ENCODE measurements at regions of chr6 and their contacts with region 1.

Region 1: DNA sequence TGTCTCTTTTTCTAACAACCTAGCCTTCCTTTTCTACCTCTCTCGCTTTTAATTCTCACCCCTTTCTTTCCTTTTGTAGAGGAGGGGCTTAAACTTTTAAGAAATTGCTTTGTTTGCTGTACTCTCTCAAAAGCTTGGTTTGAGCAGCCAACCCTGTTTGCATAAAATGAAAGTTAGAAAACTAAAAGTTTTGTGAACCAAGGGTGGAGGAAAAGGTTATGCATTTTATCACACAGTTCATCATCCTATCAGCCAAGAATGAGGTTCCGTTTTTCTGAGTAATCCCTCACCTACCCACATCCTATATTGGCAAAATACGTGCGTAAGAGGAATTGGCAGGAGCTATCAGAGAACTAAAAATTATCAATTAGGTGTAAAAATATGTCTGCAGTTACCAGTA is 42.8 kb upstream of the LOC128125822 start:
- DNase-seq: no peak
- H3K4me3 ChIP-seq: no peak overlapping the region
- H3K27ac ChIP-seq: no peak overlapping the region
- H3K4me1 ChIP-seq: peaks cover 19% of the 10 kb centered on the region
- CTCF ChIP-seq: no peak

Region 2: GRCh38 chr6:62803094-62803493 is 726.4 kb before region 1 on chr6:
- CTCF ChIA-PET with region 1: no interaction called
- POLR2A ChIA-PET with region 1: no interaction called
- intact Hi-C with region 1: no loop called
- DNase-seq: no peak
- H3K4me3 ChIP-seq: no peak overlapping the region
- H3K27ac ChIP-seq: no peak overlapping the region
- H3K4me1 ChIP-seq: no peaks in the 10 kb centered on the region
- CTCF ChIP-seq: no peak

Region 3: GRCh38 chr6:63516186-63516944 is 13.1 kb before region 1 on chr6:
- CTCF ChIA-PET with region 1: interaction called, 3 read pairs
- POLR2A ChIA-PET with region 1: interaction called, 10 read pairs
- intact Hi-C with region 1: no loop called
- DNase-seq: no peak
- H3K4me3 ChIP-seq: no peak overlapping the region
- H3K27ac ChIP-seq: no peak overlapping the region
- H3K4me1 ChIP-seq: peaks cover 25% of the 10 kb centered on the region
- CTCF ChIP-seq: no peak

Region 4: DNA sequence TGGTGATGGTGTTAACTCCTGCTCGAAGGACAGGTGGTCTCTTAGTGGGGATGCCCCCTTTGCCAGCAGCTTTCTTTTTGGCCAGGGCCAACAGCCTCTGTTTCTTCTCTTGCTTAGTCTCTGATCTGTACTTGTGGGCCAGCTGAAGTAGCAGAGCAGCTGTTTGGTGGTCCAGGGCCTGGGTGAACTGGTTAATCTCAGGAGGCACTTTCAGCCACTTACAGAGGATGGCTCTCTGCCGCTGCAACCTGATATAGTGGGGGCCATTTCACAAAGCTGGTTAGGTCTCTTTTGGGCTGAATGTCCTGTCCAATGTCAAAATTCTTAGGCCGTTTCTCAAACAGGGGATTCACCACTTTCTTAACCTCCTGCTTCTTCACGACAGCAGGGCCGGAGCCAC is 19.6 kb after region 1 on chr6:
- CTCF ChIA-PET with region 1: no interaction called
- POLR2A ChIA-PET with region 1: interaction called, 5 read pairs
- intact Hi-C with region 1: loop called (anchors 1 kb)
- DNase-seq: no peak
- H3K4me3 ChIP-seq: no peak overlapping the region
- H3K27ac ChIP-seq: no peak overlapping the region
- H3K4me1 ChIP-seq: no peaks in the 10 kb centered on the region
- CTCF ChIP-seq: no peak